ENCODE measurements at regions of chr16 and their contacts with region 1.

Region 1: GRCh38 chr16:47141773-47142485 is 1.8 kb downstream of the NETO2 start:
- DNase-seq: peak; percentile 86
- ATAC-seq: peak; percentile 75
- H3K4me3 ChIP-seq: peak overlapping the region; percentile 79
- H3K27ac ChIP-seq: peak overlapping the region; percentile 52
- H3K4me1 ChIP-seq: peaks cover 13% of the 10 kb centered on the region
- H3K27me3 ChIP-seq: no peaks in the 10 kb centered on the region
- CTCF ChIP-seq: peak; percentile 95 to 99 (median 99); a peak in 5 of 6 replicates
- EP300 ChIP-seq: no peak
- POLR2A ChIP-seq: peak; percentile 76
- RAD21 ChIP-seq: peak; percentile 92

Region 2: DNA sequence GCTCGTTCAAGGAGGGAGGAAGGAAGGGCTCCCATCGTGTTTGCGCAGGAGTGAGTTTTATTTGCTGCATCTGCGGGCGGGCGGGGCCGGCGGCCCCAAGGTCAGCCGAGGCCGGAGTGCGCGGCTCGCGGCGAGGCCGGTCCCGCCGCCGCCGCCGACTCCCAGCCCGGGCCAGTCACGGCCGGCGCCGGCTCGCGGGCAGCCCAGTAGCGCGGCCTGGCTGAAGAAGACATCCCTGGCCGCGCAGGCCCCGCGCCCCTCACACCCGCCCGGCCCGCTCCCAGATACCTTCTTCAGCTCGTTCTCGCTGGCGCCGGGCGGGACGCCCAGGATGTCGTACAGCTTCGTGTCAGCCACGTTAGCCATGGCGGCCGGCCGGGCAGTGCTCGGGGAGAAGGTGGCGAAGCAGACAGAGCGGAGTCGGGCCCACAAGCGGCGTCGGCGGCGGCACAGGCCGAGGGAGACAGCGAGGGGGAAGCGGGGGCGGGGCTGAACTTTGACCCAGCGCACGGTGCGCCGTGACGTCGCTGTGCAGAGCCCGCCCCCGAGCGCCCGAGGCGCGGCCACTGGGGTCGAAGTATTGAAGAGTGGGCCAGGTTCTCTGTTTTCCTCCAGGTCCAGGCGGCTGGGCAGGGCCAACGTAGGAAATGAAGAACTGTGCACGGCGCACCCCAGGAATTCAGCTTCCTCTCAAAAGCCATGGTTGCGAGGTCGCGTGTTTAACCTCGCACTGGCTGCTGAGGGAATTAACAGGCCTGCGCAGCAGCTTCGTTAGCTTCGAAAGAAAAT is 168.5 kb before region 1 on chr16 and contains the start of gene DNAJA2:
- CTCF ChIA-PET with region 1: interaction called, 3 read pairs
- POLR2A ChIA-PET with region 1: interaction called, 5 read pairs
- RAD21 ChIA-PET with region 1: interaction called, 15 read pairs
- SMC1A ChIA-PET with region 1: interaction called, 5 read pairs
- in situ Hi-C with region 1: no loop called
- intact Hi-C with region 1: loop called (anchors 5 kb)
- DNase-seq: peak; percentile 54
- ATAC-seq: peak; percentile 90
- H3K4me3 ChIP-seq: peak within 1 kb of the TSS; percentile 88
- H3K27ac ChIP-seq: peak within 1 kb of the TSS; percentile 98
- H3K4me1 ChIP-seq: peaks cover 23% of the 10 kb centered on the region
- H3K27me3 ChIP-seq: no peaks in the 10 kb centered on the region
- CTCF ChIP-seq: no peak
- EP300 ChIP-seq: no peak
- POLR2A ChIP-seq: peak; percentile 91
- RAD21 ChIP-seq: no peak
- polyA plus RNA-seq, gene DNAJA2: 40.4 to 43.5 TPM

Region 3: GRCh38 chr16:47073223-47074155 is 68.4 kb before region 1 on chr16:
- CTCF ChIA-PET with region 1: interaction called, 8 read pairs
- POLR2A ChIA-PET with region 1: interaction called, 9 read pairs
- RAD21 ChIA-PET with region 1: interaction called, 11 read pairs
- SMC1A ChIA-PET with region 1: interaction called, 22 read pairs
- in situ Hi-C with region 1: no loop called
- intact Hi-C with region 1: no loop called
- DNase-seq: peak; percentile 43
- ATAC-seq: peak; percentile 82
- H3K4me3 ChIP-seq: no peak overlapping the region
- H3K27ac ChIP-seq: peak overlapping the region; percentile 48
- H3K4me1 ChIP-seq: peaks cover 12% of the 10 kb centered on the region
- H3K27me3 ChIP-seq: no peaks in the 10 kb centered on the region
- CTCF ChIP-seq: no peak
- EP300 ChIP-seq: 0 out of 4 replicates have a peak, but pooled peaks of 1 of the 2 experiments have one; percentile 27
- POLR2A ChIP-seq: no peak
- RAD21 ChIP-seq: no peak

Region 4: DNA sequence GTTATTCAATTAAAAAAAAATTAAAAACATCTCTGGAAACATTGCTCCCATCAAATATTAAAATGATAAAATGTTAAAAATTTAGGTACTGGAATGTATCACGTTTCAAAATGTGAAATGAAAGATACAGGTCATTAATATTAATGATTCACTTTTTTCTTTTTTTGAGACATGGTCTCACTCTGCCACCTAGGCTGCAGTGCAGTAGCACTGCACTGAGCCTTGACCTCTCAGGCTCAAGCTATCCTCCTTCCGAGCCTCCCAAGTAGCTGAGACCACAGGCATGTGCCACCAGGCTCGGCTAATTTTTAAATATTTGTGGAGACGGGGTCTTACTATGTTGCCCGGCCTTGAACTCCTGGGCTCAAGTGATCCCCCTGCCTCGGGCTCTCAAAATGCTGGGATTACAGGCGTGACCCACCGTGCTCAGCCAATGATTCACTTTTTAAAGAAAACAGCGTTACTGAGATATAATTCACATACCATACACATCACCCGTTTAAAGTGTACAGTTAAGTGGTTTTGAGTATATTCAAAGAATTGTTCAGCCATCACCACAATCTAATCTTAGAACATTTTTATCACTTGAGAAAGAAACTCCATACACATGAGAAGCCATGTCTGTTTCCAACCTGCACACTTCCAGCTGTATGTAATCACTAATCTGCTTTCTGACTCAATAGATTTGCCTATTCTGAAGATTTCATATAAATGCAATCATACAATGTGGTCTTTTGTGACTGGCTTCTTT is 20.9 kb after region 1 on chr16:
- CTCF ChIA-PET with region 1: interaction called, 49 read pairs
- POLR2A ChIA-PET with region 1: no interaction called
- RAD21 ChIA-PET with region 1: interaction called, 5 read pairs
- SMC1A ChIA-PET with region 1: interaction called, 4 read pairs
- in situ Hi-C with region 1: no loop called
- intact Hi-C with region 1: no loop called
- DNase-seq: no peak
- ATAC-seq: no peak
- H3K4me3 ChIP-seq: no peak overlapping the region
- H3K27ac ChIP-seq: no peak overlapping the region
- H3K4me1 ChIP-seq: no peaks in the 10 kb centered on the region
- H3K27me3 ChIP-seq: no peaks in the 10 kb centered on the region
- CTCF ChIP-seq: peak in 1 of 3 experiments; percentile 17; a peak in 1 of 6 replicates
- EP300 ChIP-seq: no peak
- POLR2A ChIP-seq: no peak
- RAD21 ChIP-seq: no peak

Region 5: DNA sequence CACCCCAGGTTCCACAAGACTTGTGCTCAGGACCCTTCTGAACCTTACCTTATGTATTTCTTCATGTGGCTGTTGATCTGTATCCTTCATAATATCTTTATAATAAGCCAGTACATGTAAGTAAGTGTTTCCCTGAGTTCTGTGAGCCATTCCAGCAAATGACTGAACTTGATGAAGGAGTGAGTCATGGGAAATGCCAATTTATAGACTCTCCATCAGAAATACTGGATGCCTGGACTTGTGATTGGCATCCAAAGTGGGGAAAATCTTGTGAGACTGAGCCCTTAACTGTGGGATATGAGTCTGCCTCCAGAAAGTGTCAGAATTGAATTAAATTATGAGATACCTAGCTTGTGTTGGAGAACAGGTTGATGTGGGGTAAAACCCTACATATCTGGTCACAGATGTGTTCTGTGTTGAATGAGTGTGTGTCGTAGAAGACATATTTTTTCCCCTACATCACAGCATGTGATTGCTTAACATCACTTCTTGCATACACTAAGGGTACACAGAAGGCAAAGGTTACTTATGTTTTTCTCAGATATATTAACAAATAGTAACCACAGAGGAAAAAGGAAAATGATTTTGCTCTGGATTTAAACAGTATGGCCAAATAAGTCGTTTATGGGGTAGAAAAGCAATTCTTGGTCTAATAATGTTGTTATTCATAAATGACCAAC is 72.0 kb after region 1 on chr16:
- CTCF ChIA-PET with region 1: no interaction called
- POLR2A ChIA-PET with region 1: no interaction called
- RAD21 ChIA-PET with region 1: no interaction called
- SMC1A ChIA-PET with region 1: no interaction called
- in situ Hi-C with region 1: no loop called
- intact Hi-C with region 1: no loop called
- DNase-seq: no peak
- ATAC-seq: no peak
- H3K4me3 ChIP-seq: no peak overlapping the region
- H3K27ac ChIP-seq: no peak overlapping the region
- H3K4me1 ChIP-seq: no peaks in the 10 kb centered on the region
- H3K27me3 ChIP-seq: no peaks in the 10 kb centered on the region
- CTCF ChIP-seq: no peak
- EP300 ChIP-seq: no peak
- POLR2A ChIP-seq: no peak
- RAD21 ChIP-seq: no peak

Region 6: GRCh38 chr16:48054881-48055601 is 913.1 kb after region 1 on chr16:
- CTCF ChIA-PET with region 1: interaction called, 34 read pairs
- POLR2A ChIA-PET with region 1: interaction called, 3 read pairs
- RAD21 ChIA-PET with region 1: interaction called, 32 read pairs
- SMC1A ChIA-PET with region 1: interaction called, 8 read pairs
- in situ Hi-C with region 1: loop called (anchors 5 kb)
- intact Hi-C with region 1: loop called (anchors 2 kb)
- DNase-seq: no peak
- ATAC-seq: peak; percentile 94
- H3K4me3 ChIP-seq: no peak overlapping the region
- H3K27ac ChIP-seq: no peak overlapping the region
- H3K4me1 ChIP-seq: no peaks in the 10 kb centered on the region
- H3K27me3 ChIP-seq: no peaks in the 10 kb centered on the region
- CTCF ChIP-seq: peak; percentile 92 to 95 (median 95)
- EP300 ChIP-seq: no peak
- POLR2A ChIP-seq: no peak
- RAD21 ChIP-seq: peak; percentile 87

Region 7: GRCh38 chr16:48164907-48165726 is 1023.2 kb after region 1 on chr16:
- CTCF ChIA-PET with region 1: interaction called, 28 read pairs
- POLR2A ChIA-PET with region 1: no interaction called
- RAD21 ChIA-PET with region 1: interaction called, 47 read pairs
- SMC1A ChIA-PET with region 1: interaction called, 6 read pairs
- in situ Hi-C with region 1: loop called (anchors 5 kb)
- intact Hi-C with region 1: no loop called
- DNase-seq: no peak
- ATAC-seq: peak; percentile 98
- H3K4me3 ChIP-seq: no peak overlapping the region
- H3K27ac ChIP-seq: no peak overlapping the region
- H3K4me1 ChIP-seq: peaks cover 8% of the 10 kb centered on the region; the same call in 1 of the 2 replicates
- H3K27me3 ChIP-seq: no peaks in the 10 kb centered on the region
- CTCF ChIP-seq: peak; percentile 88 to 94 (median 90)
- EP300 ChIP-seq: no peak
- POLR2A ChIP-seq: no peak
- RAD21 ChIP-seq: peak; percentile 93